PC-3 (cell line): ENCODE measurements at regions of chr1 and their contacts with region 1.

Region 1: GRCh38 chr1:113452921-113453770 is 62.8 kb downstream of the MAGI3 start:
- DNase-seq: peak; percentile 68
- ATAC-seq: peak; percentile 46
- H3K4me3 ChIP-seq: no peak overlapping the region
- H3K27ac ChIP-seq: no peak overlapping the region
- H3K4me1 ChIP-seq: peaks cover 27% of the 10 kb centered on the region
- H3K27me3 ChIP-seq: no peaks in the 10 kb centered on the region
- CTCF ChIP-seq: peak; percentile 84

Region 2: DNA sequence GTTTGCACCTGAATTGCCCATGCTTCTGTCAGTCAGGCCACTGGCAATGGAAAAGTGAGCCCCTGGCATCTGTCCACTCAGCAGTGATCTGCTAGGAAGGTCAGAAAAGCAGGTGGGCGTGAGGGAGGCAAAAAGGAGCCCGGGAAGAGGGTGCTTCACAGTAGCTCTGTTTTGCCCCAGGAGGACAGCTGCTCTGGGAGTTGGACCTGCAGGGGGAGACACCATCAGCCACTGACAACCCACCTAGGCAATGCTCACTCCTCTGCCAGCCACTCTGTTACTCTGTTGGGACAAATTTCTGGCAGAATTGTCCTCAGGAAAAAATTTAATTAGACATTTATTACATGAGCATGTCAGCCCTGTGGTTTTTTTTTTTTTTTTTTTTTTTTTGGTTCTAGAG is 233.8 kb before region 1 on chr1:
- CTCF ChIA-PET with region 1: no interaction called
- POLR2A ChIA-PET with region 1: no interaction called
- intact Hi-C with region 1: loop called (anchors 2 kb)
- DNase-seq: peak; percentile 6
- ATAC-seq: no peak; the same call in 1 of the 2 replicates
- H3K4me3 ChIP-seq: no peak overlapping the region
- H3K27ac ChIP-seq: no peak overlapping the region
- H3K4me1 ChIP-seq: no peaks in the 10 kb centered on the region
- H3K27me3 ChIP-seq: no peaks in the 10 kb centered on the region
- CTCF ChIP-seq: peak; percentile 45; the same call in 1 of the 2 replicates

Region 3: GRCh38 chr1:113340038-113340437 is 113.1 kb before region 1 on chr1:
- CTCF ChIA-PET with region 1: no interaction called
- POLR2A ChIA-PET with region 1: no interaction called
- intact Hi-C with region 1: no loop called
- DNase-seq: no peak
- ATAC-seq: no peak
- H3K4me3 ChIP-seq: no peak overlapping the region
- H3K27ac ChIP-seq: no peak overlapping the region
- H3K4me1 ChIP-seq: no peaks in the 10 kb centered on the region
- H3K27me3 ChIP-seq: no peaks in the 10 kb centered on the region
- CTCF ChIP-seq: no peak

Region 4: GRCh38 chr1:113389953-113390834 is 63.0 kb before region 1 on chr1 and contains the start of gene MAGI3:
- CTCF ChIA-PET with region 1: interaction called, 5 read pairs
- POLR2A ChIA-PET with region 1: interaction called, 4 read pairs
- intact Hi-C with region 1: loop called (anchors 2 kb)
- DNase-seq: peak; percentile 98
- ATAC-seq: peak; percentile 81
- H3K4me3 ChIP-seq: peak within 1 kb of the TSS; percentile 75
- H3K27ac ChIP-seq: peak within 1 kb of the TSS; percentile 42
- H3K4me1 ChIP-seq: peaks cover 37% of the 10 kb centered on the region
- H3K27me3 ChIP-seq: no peaks in the 10 kb centered on the region
- CTCF ChIP-seq: no peak
- total RNA-seq, gene MAGI3: 7.2 and 10.7 TPM in 2 replicates

Region 5: DNA sequence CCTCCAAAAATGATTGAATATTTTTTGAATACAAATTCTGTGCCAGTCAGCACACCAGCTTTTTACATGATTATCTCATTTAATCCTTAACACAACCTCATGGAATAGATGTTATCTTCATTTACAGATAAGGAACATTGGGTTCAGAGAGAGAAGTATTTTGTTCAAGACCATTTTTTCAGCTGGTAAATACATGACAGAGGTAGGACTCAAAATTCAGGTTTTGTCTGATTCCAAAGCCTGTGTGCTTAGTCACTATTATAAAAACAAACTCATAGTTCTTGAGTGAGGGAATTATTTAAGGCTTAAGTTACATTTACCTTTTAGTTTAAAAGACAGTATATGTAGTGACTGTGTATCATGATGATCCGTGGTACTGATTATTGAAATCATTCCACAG is 62.3 kb after region 1 on chr1:
- CTCF ChIA-PET with region 1: no interaction called
- POLR2A ChIA-PET with region 1: no interaction called
- intact Hi-C with region 1: no loop called
- DNase-seq: peak; percentile 80
- ATAC-seq: peak; percentile 69
- H3K4me3 ChIP-seq: 0 out of 2 replicates have a peak overlapping the region, but pooled peaks have one; percentile 17
- H3K27ac ChIP-seq: 0 out of 2 replicates have a peak overlapping the region, but pooled peaks have one; percentile 5
- H3K4me1 ChIP-seq: peaks cover 26% of the 10 kb centered on the region
- H3K27me3 ChIP-seq: no peaks in the 10 kb centered on the region
- CTCF ChIP-seq: no peak

Region 6: DNA sequence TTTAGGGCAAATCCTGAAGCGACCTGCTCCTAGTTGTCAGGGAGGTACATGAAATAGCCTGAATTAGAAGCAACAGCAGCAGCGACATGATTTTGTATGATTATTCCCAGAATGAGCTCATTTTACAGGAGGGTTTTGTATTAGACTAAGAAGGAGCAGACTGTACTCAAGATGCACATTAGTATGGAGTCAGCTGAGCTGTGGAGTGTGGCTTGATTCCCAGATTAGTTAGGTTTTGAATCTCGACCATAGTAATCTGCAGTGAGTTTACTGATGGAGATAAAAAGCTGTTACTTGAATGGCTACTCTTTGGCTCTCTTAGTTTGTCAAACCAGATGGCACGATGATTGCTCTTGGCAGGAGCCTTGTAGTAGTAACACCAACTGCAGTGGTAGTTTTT is 163.0 kb after region 1 on chr1:
- CTCF ChIA-PET with region 1: no interaction called
- POLR2A ChIA-PET with region 1: no interaction called
- intact Hi-C with region 1: loop called (anchors 2 kb)
- DNase-seq: no peak
- ATAC-seq: no peak
- H3K4me3 ChIP-seq: no peak overlapping the region
- H3K27ac ChIP-seq: no peak overlapping the region
- H3K4me1 ChIP-seq: peaks cover 5% of the 10 kb centered on the region
- H3K27me3 ChIP-seq: no peaks in the 10 kb centered on the region
- CTCF ChIP-seq: no peak

Region 7: GRCh38 chr1:113887402-113888175 is 434.4 kb after region 1 on chr1 and contains the start of gene BCL2L15:
- CTCF ChIA-PET with region 1: no interaction called
- POLR2A ChIA-PET with region 1: no interaction called
- intact Hi-C with region 1: no loop called
- DNase-seq: peak; percentile 10
- ATAC-seq: no peak
- H3K4me3 ChIP-seq: no peak within 1 kb of the TSS
- H3K27ac ChIP-seq: no peak within 1 kb of the TSS
- H3K4me1 ChIP-seq: no peaks in the 10 kb centered on the region
- H3K27me3 ChIP-seq: no peaks in the 10 kb centered on the region
- CTCF ChIP-seq: no peak
- total RNA-seq, gene BCL2L15: 0.29 TPM in 1 of 2 replicates, not detected in the other

Region 8: DNA sequence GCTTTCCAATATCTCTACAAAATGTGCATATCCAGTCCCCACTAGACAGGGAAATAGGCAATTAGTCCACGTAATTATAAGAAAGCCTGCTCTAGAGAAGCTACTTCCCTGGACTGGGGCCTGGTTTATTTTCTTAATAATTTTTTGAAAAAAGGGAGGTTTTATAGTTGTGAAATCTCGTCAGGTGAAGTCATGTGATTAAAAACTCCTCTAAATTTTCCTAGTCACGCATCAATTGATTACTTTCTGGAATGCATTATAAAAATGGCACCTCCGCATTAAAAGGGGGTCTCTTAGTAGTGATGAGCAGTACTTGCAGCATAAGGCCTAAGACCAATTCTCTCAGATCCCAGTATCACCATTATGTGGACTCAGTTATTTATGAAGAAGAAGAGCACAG is 949.7 kb after region 1 on chr1:
- CTCF ChIA-PET with region 1: no interaction called
- POLR2A ChIA-PET with region 1: interaction called, 10 read pairs
- intact Hi-C with region 1: no loop called
- DNase-seq: no peak
- ATAC-seq: no peak
- H3K4me3 ChIP-seq: no peak overlapping the region
- H3K27ac ChIP-seq: no peak overlapping the region
- H3K4me1 ChIP-seq: no peaks in the 10 kb centered on the region
- H3K27me3 ChIP-seq: no peaks in the 10 kb centered on the region
- CTCF ChIP-seq: no peak